ENCODE measurements at regions of chr11 and their contacts with region 1.

Region 1: GRCh38 chr11:122202951-122203456 is 87.0 kb upstream of the BLID start:
- DNase-seq: no peak
- H3K4me3 ChIP-seq: peak overlapping the region in 2 of 3 experiments; percentile 28 to 72
- H3K27ac ChIP-seq: peak overlapping the region; percentile 74
- H3K4me1 ChIP-seq: peaks cover 42% of the 10 kb centered on the region
- H3K27me3 ChIP-seq: no peaks in the 10 kb centered on the region
- CTCF ChIP-seq: peak; percentile 96 to 99
- POLR2A ChIP-seq: no peak

Region 2: DNA sequence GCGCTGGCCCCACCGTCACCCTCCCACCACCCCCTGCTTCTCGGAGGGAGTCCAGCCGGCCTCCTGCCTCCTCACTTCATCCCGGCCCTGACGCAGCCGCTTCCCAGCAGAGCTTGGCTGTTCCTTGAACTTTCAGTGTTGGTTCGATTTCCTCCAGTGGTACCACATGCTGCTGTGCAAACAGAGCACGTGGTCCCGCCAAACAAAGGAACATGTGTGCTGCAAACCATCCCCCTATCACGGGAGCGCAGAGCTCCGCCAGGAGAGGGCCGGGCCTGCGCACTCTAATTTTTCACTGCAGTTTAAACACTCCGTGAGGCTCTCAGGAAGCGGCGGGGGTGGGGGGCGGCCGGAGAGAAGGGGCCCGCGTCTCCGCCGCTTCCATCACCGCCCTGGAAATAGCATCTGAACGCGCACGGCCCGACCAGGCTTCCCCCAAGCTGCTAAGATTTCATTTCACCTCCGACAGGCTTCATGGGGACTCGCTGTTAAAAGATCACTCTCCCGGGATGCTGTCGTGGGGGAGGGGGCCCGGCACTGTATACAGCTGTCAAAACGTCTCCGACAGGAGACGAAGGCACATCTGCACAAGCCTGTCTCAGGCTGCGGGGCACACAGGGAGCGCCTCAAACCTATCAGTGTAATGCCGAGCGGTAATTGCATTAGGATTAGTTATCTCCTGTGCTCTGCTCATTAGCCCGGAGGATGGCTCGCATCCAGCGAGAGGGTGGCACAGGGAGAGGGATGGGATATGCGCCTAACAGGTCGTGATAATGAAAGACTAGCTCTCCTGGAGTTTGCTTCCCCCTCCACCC is 480.4 kb before region 1 on chr11:
- CTCF ChIA-PET with region 1: interaction called, 6 read pairs
- POLR2A ChIA-PET with region 1: no interaction called
- dilution Hi-C with region 1: no loop called
- intact Hi-C with region 1: loop called (anchors 2 kb)
- DNase-seq: peak; percentile 94
- H3K4me3 ChIP-seq: peak overlapping the region; percentile 21 to 59 (median 31)
- H3K27ac ChIP-seq: peak overlapping the region; percentile 59
- H3K4me1 ChIP-seq: peaks cover 25% of the 10 kb centered on the region
- H3K27me3 ChIP-seq: peaks cover 3 to 5% of the 10 kb centered on the region in 2 experiments
- CTCF ChIP-seq: no peak
- POLR2A ChIP-seq: no peak

Region 3: GRCh38 chr11:122101625-122102291 is 101.2 kb before region 1 on chr11:
- CTCF ChIA-PET with region 1: interaction called, 91 read pairs
- POLR2A ChIA-PET with region 1: no interaction called
- dilution Hi-C with region 1: no loop called
- intact Hi-C with region 1: loop called (anchors 1 kb)
- DNase-seq: peak; percentile 89
- H3K4me3 ChIP-seq: peak overlapping the region in 2 of 3 experiments; percentile 69 to 70
- H3K27ac ChIP-seq: peak overlapping the region; percentile 71
- H3K4me1 ChIP-seq: peaks cover 74% of the 10 kb centered on the region
- H3K27me3 ChIP-seq: no peaks in the 10 kb centered on the region
- CTCF ChIP-seq: peak; percentile 45 to 64
- POLR2A ChIP-seq: no peak

Region 4: GRCh38 chr11:122153746-122154145 is 49.3 kb before region 1 on chr11:
- CTCF ChIA-PET with region 1: interaction called, 21 read pairs
- POLR2A ChIA-PET with region 1: no interaction called
- dilution Hi-C with region 1: no loop called
- intact Hi-C with region 1: loop called (anchors 1 kb)
- DNase-seq: peak; percentile 20
- H3K4me3 ChIP-seq: no peak overlapping the region
- H3K27ac ChIP-seq: no peak overlapping the region
- H3K4me1 ChIP-seq: peaks cover 32% of the 10 kb centered on the region
- H3K27me3 ChIP-seq: no peaks in the 10 kb centered on the region
- CTCF ChIP-seq: no peak
- POLR2A ChIP-seq: no peak

Region 5: DNA sequence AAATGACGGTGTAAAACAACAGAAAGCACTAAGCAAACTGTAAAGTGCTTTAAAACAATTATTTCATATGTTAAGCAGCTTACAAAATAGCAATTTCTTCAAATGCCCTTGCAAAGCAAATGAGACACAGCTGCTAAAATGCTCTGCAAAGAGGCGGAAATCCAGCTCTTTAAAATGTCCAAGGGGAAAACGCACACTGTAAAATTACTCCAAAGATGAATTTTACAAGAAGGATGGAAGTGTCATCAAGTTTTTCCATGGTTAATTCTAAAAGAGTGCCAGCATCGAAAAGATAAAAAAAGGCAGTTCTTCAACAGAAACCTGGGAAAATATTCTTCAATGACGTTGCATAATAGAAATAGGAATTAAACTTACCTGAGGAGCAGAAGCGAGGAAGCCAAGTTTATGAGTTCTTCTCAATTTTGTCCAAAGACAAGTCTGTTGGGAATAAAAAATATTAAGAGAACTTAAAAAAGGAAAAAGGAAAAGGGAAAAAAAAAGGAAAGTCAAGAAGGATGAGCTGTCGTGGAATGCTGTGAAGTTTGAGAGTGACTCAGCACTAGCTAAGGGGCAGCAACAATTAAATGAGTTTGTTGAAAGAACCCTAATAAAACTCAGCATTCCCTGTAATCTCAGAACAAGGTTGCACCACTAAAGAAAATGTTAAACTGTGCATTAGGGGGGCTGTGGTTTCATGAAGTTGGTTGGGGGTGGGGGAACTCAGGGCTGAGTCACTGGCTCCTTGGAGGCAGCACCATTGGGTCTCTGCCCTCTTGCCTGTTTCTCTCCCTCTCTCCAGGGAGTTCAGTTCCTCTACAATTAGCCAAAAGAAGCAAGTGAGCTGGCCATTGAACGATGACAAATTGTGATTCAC is 22.8 kb before region 1 on chr11:
- CTCF ChIA-PET with region 1: interaction called, 22 read pairs
- POLR2A ChIA-PET with region 1: no interaction called
- dilution Hi-C with region 1: no loop called
- intact Hi-C with region 1: loop called (anchors 1 kb)
- DNase-seq: peak; percentile 87
- H3K4me3 ChIP-seq: peak overlapping the region; percentile 29 to 100 (median 99)
- H3K27ac ChIP-seq: peak overlapping the region; percentile 86
- H3K4me1 ChIP-seq: peaks cover 66% of the 10 kb centered on the region
- H3K27me3 ChIP-seq: no peaks in the 10 kb centered on the region
- CTCF ChIP-seq: no peak
- POLR2A ChIP-seq: peak; percentile 84

Region 6: DNA sequence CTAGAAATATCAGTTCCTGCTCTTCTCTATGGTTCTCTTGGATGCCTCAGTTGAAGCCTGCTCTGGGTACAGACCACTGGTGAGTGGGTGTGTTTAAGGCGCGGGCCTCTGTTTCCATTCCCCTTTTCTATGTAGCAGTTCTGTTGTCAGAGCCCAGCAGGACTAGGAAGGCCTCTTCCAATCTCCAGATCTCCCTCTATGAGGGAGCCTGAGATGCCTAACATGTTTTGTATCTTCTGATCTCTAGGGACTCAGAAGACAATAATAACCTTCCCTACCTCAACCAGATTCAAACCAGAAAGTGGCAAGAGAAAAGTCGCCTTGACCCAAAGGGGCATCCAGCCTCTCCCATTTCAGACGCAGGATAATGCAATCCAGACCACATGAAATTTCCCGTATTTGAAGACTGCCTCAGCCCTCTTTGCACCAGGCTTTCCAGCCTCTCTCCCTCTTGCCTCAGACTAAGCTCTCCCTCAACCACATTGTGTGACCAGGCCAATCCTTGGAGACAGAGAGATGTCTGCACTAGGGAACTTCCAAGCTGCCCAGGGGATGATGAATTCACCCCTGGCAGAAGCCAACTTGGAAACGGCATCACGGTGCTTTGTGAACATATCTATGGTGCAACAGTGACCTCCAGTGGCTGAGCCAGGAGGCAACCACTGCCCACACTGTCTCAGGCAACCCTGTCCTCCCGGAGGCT is 302.5 kb after region 1 on chr11:
- CTCF ChIA-PET with region 1: interaction called, 5 read pairs
- POLR2A ChIA-PET with region 1: no interaction called
- dilution Hi-C with region 1: no loop called
- intact Hi-C with region 1: loop called (anchors 5 kb)
- DNase-seq: peak; percentile 77
- H3K4me3 ChIP-seq: no peak overlapping the region
- H3K27ac ChIP-seq: no peak overlapping the region
- H3K4me1 ChIP-seq: no peaks in the 10 kb centered on the region
- H3K27me3 ChIP-seq: peaks cover 2 to 6% of the 10 kb centered on the region in 2 experiments
- CTCF ChIP-seq: peak; percentile 83 to 84
- POLR2A ChIP-seq: no peak